HepG2 (cell line): ENCODE measurements at regions of chr16 and their contacts with region 1.

Region 1: DNA sequence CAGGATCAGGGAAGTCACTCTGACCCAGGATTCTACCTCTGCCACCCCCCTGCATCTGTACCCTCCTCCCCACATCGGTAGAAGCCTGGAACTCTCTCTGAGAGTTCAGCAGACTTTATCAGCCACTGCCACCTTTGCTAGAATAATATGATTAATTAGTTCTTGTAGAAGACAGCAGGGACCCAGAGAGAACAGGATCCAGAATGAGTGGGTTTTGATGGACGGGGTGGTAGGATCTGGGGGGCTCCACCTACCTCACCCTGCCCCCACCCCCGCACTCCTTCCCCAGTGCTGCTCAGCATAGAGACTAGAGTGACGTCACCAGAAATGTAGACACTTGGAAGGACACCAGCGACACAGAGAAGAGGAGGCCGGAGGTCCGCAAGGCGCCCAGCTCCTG is 33.5 kb downstream of the ABCC6 start:
- DNase-seq: no peak
- ATAC-seq: no peak
- H3K4me3 ChIP-seq: no peak overlapping the region
- H3K27ac ChIP-seq: no peak overlapping the region
- H3K4me1 ChIP-seq: no peaks in the 10 kb centered on the region
- H3K27me3 ChIP-seq: no peaks in the 10 kb centered on the region
- CTCF ChIP-seq: no peak
- EP300 ChIP-seq: no peak
- POLR2A ChIP-seq: no peak
- RAD21 ChIP-seq: no peak

Region 2: DNA sequence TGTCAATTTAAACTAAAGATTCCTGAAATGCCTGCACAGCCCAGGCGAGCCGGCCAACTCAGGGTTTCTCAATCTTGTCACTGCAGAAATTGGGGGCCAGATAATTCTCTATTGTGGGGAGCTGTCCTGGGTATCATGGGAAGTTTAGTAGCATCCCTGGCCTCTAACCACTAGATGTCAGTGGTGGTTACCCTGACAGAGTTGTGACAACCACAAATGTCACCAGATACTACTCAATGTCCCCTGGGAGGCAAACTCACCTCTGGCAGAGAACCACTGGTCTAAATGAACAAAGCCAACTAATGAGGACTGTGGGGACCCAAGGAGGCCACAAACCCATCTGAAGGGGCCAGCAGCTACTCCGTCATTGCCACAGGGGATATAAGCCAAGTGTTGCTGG is 424.0 kb before region 1 on chr16:
- CTCF ChIA-PET with region 1: interaction called, 5 read pairs
- POLR2A ChIA-PET with region 1: no interaction called
- in situ Hi-C with region 1: no loop called
- intact Hi-C with region 1: loop called (anchors 5 kb)
- DNase-seq: peak; percentile 73
- ATAC-seq: peak; percentile 96
- H3K4me3 ChIP-seq: no peak overlapping the region
- H3K27ac ChIP-seq: no peak overlapping the region
- H3K4me1 ChIP-seq: no peaks in the 10 kb centered on the region
- H3K27me3 ChIP-seq: peaks cover 0 to 10% of the 10 kb centered on the region in 2 experiments; a peak in 4 of 5 replicates
- CTCF ChIP-seq: peak; percentile 90
- EP300 ChIP-seq: no peak
- POLR2A ChIP-seq: no peak
- RAD21 ChIP-seq: peak; percentile 86